ENCODE measurements at regions of chr19 and their contacts with region 1.

Region 1: GRCh38 chr19:6516659-6517291 is 14.1 kb upstream of the TNFSF9 start:
- DNase-seq: peak; percentile 95
- ATAC-seq: peak; percentile 76
- H3K4me3 Mint-ChIP-seq: peak overlapping the region; percentile 85
- H3K27ac Mint-ChIP-seq: peak overlapping the region; percentile 89
- H3K4me1 Mint-ChIP-seq: peaks cover 32% of the 10 kb centered on the region
- H3K27me3 Mint-ChIP-seq: peaks cover 1% of the 10 kb centered on the region
- CTCF ChIP-seq: peak; percentile 96

Region 2: DNA sequence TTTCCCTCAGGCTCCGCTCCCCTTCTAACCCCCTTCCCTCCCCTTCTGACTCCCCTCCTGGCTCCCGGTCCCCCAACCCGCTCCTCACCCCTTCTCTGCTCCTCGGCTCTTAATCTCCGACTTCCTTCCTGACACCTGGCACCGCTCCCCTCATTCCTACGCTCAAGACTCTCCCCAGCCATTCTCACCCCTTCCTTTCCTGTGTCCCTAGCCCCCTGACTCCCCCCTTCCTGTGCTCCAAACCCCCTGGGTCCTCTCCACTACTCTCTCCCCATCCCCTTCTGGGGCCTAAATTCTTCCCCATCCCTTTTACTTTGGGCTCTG is 154.8 kb before region 1 on chr19:
- CTCF ChIA-PET with region 1: no interaction called
- POLR2A ChIA-PET with region 1: no interaction called
- intact Hi-C with region 1: no loop called
- DNase-seq: no peak
- ATAC-seq: peak; percentile 2
- H3K4me3 Mint-ChIP-seq: peak overlapping the region; percentile 92
- H3K27ac Mint-ChIP-seq: peak overlapping the region; percentile 97
- H3K4me1 Mint-ChIP-seq: peaks cover 14% of the 10 kb centered on the region
- H3K27me3 Mint-ChIP-seq: no peaks in the 10 kb centered on the region
- CTCF ChIP-seq: no peak

Region 3: GRCh38 chr19:6443986-6444385 is 72.8 kb before region 1 on chr19:
- CTCF ChIA-PET with region 1: no interaction called
- POLR2A ChIA-PET with region 1: no interaction called
- intact Hi-C with region 1: no loop called
- DNase-seq: no peak
- ATAC-seq: no peak
- H3K4me3 Mint-ChIP-seq: no peak overlapping the region
- H3K27ac Mint-ChIP-seq: no peak overlapping the region
- H3K4me1 Mint-ChIP-seq: no peaks in the 10 kb centered on the region
- H3K27me3 Mint-ChIP-seq: no peaks in the 10 kb centered on the region
- CTCF ChIP-seq: no peak

Region 4: GRCh38 chr19:6475321-6476108 is 41.3 kb before region 1 on chr19:
- CTCF ChIA-PET with region 1: no interaction called
- POLR2A ChIA-PET with region 1: no interaction called
- intact Hi-C with region 1: no loop called
- DNase-seq: no peak
- ATAC-seq: no peak
- H3K4me3 Mint-ChIP-seq: no peak overlapping the region
- H3K27ac Mint-ChIP-seq: no peak overlapping the region
- H3K4me1 Mint-ChIP-seq: peaks cover 13% of the 10 kb centered on the region
- H3K27me3 Mint-ChIP-seq: no peaks in the 10 kb centered on the region
- CTCF ChIP-seq: no peak

Region 5: GRCh38 chr19:6551607-6552450 is 35.1 kb after region 1 on chr19:
- CTCF ChIA-PET with region 1: interaction called, 10 read pairs
- POLR2A ChIA-PET with region 1: no interaction called
- intact Hi-C with region 1: no loop called
- DNase-seq: peak; percentile 88
- ATAC-seq: peak; percentile 99
- H3K4me3 Mint-ChIP-seq: no peak overlapping the region
- H3K27ac Mint-ChIP-seq: peak overlapping the region; percentile 49
- H3K4me1 Mint-ChIP-seq: peaks cover 14% of the 10 kb centered on the region
- H3K27me3 Mint-ChIP-seq: no peaks in the 10 kb centered on the region
- CTCF ChIP-seq: peak; percentile 67

Region 6: DNA sequence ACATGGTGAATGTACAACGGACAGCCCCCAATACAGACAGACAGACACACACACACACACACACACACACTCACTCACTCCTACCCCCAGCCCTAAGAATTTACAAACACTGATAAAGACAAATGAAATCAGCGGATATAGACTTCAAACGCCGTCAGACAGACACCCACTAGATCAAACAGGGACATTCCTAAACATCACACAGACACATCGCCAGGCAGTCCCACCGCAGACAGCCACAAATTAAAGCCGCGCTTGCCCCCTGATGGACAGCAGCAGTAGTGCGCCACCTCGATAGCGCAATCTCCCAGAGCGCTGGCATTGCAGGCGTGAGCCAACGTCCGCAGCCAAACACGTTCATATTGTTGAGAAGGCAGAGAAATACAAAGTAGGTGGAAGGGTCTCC is 345.9 kb after region 1 on chr19:
- CTCF ChIA-PET with region 1: interaction called, 11 read pairs
- POLR2A ChIA-PET with region 1: interaction called, 6 read pairs
- intact Hi-C with region 1: loop called (anchors 2 kb)
- DNase-seq: peak; percentile 97
- ATAC-seq: peak; percentile 88
- H3K4me3 Mint-ChIP-seq: peak overlapping the region; percentile 77
- H3K27ac Mint-ChIP-seq: peak overlapping the region; percentile 79
- H3K4me1 Mint-ChIP-seq: peaks cover 14% of the 10 kb centered on the region
- H3K27me3 Mint-ChIP-seq: no peaks in the 10 kb centered on the region
- CTCF ChIP-seq: peak; percentile 81